ENCODE measurements at regions of chr3 and their contacts with region 1.

Region 1: DNA sequence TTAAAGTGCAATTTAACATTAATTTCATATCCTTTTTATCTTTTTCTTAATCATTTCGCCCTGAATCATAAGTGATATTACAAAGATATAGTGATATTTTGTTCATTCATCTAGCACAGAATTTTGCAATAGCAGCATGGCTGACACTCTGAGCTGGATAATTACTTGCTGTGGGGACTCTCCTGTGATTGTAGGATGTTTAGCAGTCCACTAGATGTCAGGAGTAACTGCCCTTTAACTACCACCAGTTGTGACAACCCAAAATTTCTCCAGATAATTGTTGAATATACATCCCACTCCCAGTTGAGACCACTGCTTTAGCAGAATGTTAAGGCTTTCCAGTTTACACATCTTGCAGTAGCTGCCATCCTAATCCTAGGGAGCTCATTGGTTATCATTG is 196.8 kb upstream of the MBNL1 start:
- DNase-seq: no peak
- ATAC-seq: peak; percentile 60 to 83
- H3K4me3 ChIP-seq: no peak overlapping the region
- H3K27ac ChIP-seq: no peak overlapping the region
- H3K4me1 ChIP-seq: peaks cover 3 to 8% of the 10 kb centered on the region in 2 donors
- H3K27me3 ChIP-seq: no peaks in the 10 kb centered on the region
- CTCF ChIP-seq: peak; percentile 29 to 55 (median 39)
- POLR2A ChIP-seq: no peak

Region 2: DNA sequence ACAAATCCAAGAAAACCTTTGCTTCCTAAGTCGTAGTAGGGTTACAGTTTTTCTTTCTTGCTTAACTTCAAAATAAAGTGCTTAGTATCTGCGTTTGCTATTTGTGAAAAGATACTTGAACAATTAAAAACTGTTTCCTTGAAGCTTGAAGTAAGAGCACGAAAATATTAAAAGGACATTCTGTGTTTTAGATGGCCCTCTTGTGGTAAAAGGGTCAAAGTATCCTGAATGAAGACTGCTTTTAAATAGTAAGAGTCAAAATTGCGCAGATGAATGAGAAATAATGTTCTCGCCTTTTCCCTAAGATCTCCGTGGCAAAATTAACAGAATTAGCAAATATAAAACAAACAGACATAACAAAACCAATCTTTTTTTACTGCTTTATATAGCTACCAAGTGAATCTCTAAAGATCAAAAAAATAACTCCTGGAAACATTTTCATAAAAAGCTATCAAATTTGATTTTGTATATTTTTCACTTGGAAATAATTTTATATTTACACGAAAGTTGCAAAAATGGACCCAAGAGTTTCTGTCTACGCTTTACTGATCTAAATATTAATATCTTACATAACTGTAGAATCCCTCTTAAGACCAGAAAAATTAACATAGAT is 372.2 kb after region 1 on chr3:
- in situ Hi-C with region 1: loop called in 1 of 4 experiments (anchors 10 kb)
- intact Hi-C with region 1: loop called (anchors 10 kb)
- DNase-seq: no peak
- ATAC-seq: peak; percentile 51 to 56
- H3K4me3 ChIP-seq: peak overlapping the region in 1 of 4 donors; percentile 19
- H3K27ac ChIP-seq: peak overlapping the region; percentile 53 to 71 (median 62)
- H3K4me1 ChIP-seq: peaks cover 70 to 72% of the 10 kb centered on the region in 2 donors
- H3K27me3 ChIP-seq: no peaks in the 10 kb centered on the region
- CTCF ChIP-seq: peak; percentile 59 to 82 (median 68)
- POLR2A ChIP-seq: no peak

Region 3: GRCh38 chr3:152471814-152472671 is 400.1 kb after region 1 on chr3:
- in situ Hi-C with region 1: loop called in 2 of 4 experiments (anchors 25 kb)
- intact Hi-C with region 1: loop called (anchors 1 kb)
- DNase-seq: peak; percentile 32 to 52
- ATAC-seq: peak; percentile 62 to 63
- H3K4me3 ChIP-seq: peak overlapping the region in 2 of 4 donors; percentile 13 to 31
- H3K27ac ChIP-seq: peak overlapping the region; percentile 34 to 62 (median 53)
- H3K4me1 ChIP-seq: peaks cover 13% of the 10 kb centered on the region in 2 donors
- H3K27me3 ChIP-seq: no peaks in the 10 kb centered on the region
- CTCF ChIP-seq: peak; percentile 72 to 78 (median 76)
- POLR2A ChIP-seq: no peak

Region 4: DNA sequence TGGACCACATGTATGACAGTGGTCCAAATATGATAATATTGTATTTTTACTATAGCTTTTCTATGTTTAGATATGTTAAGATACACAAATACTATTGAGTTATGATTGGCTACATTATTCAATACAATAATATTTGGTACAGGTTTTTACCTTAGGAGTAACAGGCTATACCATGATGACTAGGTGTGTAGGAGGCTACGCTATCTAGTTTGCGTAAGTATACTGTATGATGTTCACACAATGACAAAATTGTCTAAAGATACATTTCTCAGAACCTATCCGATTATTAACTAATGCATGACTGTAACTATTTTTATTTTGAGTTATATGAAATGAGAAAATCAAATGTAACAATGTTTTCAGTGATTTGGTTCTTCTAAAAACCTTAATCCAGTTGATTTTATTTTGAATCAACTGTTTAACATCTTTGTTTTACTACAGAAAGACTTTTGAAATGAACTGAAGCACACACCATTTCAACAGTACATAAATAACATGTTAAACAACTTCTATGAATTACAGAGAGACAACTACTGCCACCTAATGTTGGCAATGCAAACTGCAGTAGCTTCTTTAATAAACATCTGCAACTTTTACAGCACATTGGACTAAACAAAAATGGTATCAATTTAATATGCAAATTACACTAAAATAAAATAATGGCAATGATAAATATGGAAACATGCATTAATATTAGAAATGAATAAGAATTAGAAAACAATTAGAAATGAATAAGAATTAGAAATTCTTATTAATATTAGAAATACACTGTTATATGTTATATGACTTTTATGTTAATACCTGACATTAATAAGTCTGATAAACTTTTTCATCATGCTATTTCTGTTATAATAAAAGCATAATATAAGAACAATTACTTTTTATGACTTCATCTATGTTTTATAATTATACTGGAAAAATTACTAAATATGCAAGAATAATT is 452.5 kb after region 1 on chr3:
- in situ Hi-C with region 1: no loop called
- intact Hi-C with region 1: loop called (anchors 2 kb)
- DNase-seq: no peak
- ATAC-seq: peak; percentile 31 to 79
- H3K4me3 ChIP-seq: no peak overlapping the region
- H3K27ac ChIP-seq: no peak overlapping the region
- H3K4me1 ChIP-seq: no peaks in the 10 kb centered on the region
- H3K27me3 ChIP-seq: no peaks in the 10 kb centered on the region
- CTCF ChIP-seq: peak; percentile 64 to 89 (median 79)
- POLR2A ChIP-seq: no peak

Region 5: DNA sequence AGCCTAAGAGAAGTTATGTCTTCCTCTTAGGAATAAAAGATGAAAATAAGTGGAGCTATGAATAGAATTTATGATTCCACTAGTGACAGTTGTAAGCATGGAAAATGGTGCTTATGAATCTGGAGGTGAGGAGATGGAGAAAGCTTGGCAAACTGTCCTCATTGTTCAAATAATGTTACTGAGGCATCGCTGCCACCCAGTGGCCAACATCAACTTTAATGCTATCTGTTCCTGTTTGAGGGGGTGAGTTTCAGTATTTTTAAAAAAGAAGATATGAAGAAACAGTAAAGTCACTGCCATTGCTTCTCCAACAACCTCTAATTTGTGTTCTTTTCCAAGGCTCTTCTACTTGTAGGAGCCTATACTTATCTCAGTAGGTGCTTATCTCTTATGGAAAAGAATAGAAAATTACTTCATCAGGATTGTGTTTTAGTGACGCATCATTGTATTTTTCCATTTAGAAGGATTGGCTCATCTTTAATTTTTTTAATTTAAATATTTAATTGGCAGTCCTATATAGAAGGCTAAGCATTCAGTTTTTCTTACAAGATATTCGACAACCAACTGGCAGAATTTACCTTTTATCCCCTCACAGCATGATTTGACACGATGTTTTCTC is 502.6 kb after region 1 on chr3:
- in situ Hi-C with region 1: no loop called
- intact Hi-C with region 1: loop called (anchors 10 kb)
- DNase-seq: peak; percentile 30 to 37
- ATAC-seq: peak in 1 of 2 donors; percentile 62
- H3K4me3 ChIP-seq: no peak overlapping the region
- H3K27ac ChIP-seq: no peak overlapping the region
- H3K4me1 ChIP-seq: no peaks in the 10 kb centered on the region
- H3K27me3 ChIP-seq: no peaks in the 10 kb centered on the region
- CTCF ChIP-seq: peak; percentile 8 to 54 (median 50)
- POLR2A ChIP-seq: no peak